Activated CD4-positive, alpha-beta memory T cell treated with anti-CD3 and anti-CD28 coated beads for 36 hours (primary cell): ENCODE measurements at regions of chr19 and their contacts with region 1.

Region 1: DNA sequence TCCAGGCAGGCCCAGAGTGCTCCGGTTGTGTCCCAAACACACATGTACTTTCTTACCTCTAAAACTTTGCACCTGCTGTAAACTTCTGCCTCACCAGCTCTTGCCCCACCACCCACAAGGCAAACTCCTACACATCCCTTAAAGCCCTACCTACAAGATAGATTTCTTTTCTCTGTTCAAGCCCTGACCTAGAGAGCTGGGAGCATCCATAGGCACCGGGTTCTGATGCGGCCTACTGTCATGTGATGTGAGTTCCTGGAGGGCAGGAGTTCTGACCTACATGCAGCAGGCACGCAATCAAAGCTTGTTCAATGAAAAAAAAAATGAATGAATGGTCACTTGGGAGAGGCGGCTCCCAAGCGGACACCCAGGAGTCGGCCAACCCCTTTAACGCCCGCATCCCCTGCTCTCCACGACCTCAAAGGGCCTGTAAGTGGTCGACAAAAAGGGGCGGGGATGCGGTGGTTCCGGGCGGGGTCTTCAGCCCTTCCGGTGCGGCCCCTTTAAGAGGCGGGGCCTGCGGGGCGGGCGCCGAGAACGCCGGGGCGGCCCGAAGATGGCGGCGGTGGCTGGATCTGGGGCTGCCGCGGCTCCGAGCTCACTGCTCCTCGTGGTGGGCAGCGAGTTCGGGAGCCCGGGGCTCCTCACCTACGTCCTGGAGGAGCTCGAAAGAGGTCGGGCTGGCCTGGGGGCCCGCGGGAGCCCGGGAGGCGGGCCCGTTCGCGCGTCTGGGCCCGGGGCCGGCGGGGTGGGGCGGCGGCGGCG is at the start of gene MAP1S:
- DNase-seq: peak; percentile 76
- H3K4me3 Mint-ChIP-seq: peak within 1 kb of the TSS; percentile 83
- H3K27ac Mint-ChIP-seq: peak within 1 kb of the TSS; percentile 77
- H3K4me1 Mint-ChIP-seq: peaks cover 30% of the 10 kb centered on the region
- H3K27me3 Mint-ChIP-seq: no peaks in the 10 kb centered on the region
- total RNA-seq, gene MAP1S: 63.0 to 71.2 TPM

Region 2: GRCh38 chr19:17576759-17577473 is 142.2 kb before region 1 on chr19:
- CTCF ChIA-PET with region 1: no interaction called
- POLR2A ChIA-PET with region 1: no interaction called
- intact Hi-C with region 1: no loop called
- DNase-seq: peak; percentile 43
- H3K4me3 Mint-ChIP-seq: no peak overlapping the region
- H3K27ac Mint-ChIP-seq: no peak overlapping the region
- H3K4me1 Mint-ChIP-seq: no peaks in the 10 kb centered on the region
- H3K27me3 Mint-ChIP-seq: no peaks in the 10 kb centered on the region

Region 3: DNA sequence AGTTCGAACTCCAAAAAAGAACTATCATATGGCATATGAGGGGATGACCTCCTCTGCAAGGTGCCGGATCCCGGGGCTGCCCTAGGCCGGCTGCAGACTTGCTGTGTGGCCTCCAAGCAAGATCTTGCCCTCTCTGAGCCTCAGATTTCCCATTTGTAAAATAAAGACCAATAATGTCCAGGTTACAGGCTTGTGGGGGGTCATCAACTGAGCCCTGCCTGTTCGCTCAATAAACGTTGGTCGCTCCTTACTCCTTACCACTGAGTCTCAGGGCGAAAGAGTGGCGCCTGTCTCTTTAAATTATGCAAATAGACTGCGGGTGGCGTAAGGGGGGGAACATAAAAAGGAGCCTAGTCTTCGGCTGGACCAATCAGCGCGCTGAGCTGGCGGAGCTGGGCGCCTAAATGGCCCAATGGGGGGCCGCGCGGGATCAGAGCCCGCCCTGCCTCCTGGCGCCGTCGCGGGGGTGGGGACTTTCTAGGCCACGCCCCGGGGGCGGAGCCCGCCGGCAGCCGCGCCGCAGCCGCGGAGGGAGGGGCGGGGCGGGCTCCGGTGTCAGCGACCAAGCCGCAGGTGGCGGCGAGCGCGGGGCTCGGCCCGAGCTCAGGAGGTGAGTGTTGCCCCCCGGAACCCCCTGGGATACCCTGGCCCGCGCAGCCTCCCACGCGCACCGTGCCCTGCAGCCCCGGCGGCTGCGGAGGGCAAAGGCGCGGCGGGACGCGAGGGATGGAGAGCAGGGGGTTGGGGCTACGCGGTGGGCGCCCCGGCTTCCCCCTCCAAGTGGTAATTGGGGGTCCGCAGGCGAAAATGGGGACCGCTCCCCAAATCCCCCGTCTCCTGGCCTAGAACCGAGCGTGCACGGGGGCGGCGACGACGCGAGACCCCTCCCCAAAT is 28.3 kb after region 1 on chr19:
- CTCF ChIA-PET with region 1: interaction called, 3 read pairs
- POLR2A ChIA-PET with region 1: interaction called, 6 read pairs
- intact Hi-C with region 1: loop called (anchors 2 kb)
- DNase-seq: peak; percentile 97
- H3K4me3 Mint-ChIP-seq: peak overlapping the region; percentile 83
- H3K27ac Mint-ChIP-seq: peak overlapping the region; percentile 65
- H3K4me1 Mint-ChIP-seq: peaks cover 39% of the 10 kb centered on the region
- H3K27me3 Mint-ChIP-seq: no peaks in the 10 kb centered on the region